Activated T-helper 2 cell treated with anti-CD3 and anti-CD28 coated beads, Interferon-gamma antibody, Interleukin-2, Interleukin-4, amounts not matched to agents 10 μg/mL and 5 μg/mL and 100 μg/mL, durations not matched to agents 14 hours and 24 hours and 36 hours (primary cell): ENCODE measurements at regions of chr16 and their contacts with region 1.

Region 1: GRCh38 chr16:59047114-59047513 is 313.0 kb upstream of the GOT2 start:
- DNase-seq: no peak
- H3K4me3 Mint-ChIP-seq: no peak overlapping the region
- H3K27ac Mint-ChIP-seq: no peak overlapping the region
- H3K4me1 Mint-ChIP-seq: no peaks in the 10 kb centered on the region
- H3K27me3 Mint-ChIP-seq: no peaks in the 10 kb centered on the region

Region 2: GRCh38 chr16:58814348-58814801 is 232.7 kb before region 1 on chr16:
- intact Hi-C with region 1: loop called (anchors 5 kb)
- DNase-seq: peak; percentile 10
- H3K4me3 Mint-ChIP-seq: peak overlapping the region; percentile 5
- H3K27ac Mint-ChIP-seq: no peak overlapping the region
- H3K4me1 Mint-ChIP-seq: peaks cover 4% of the 10 kb centered on the region
- H3K27me3 Mint-ChIP-seq: no peaks in the 10 kb centered on the region